Heart right ventricle (tissue), 16 donors: ENCODE measurements at regions of chr12 and their contacts with region 1.

Region 1: DNA sequence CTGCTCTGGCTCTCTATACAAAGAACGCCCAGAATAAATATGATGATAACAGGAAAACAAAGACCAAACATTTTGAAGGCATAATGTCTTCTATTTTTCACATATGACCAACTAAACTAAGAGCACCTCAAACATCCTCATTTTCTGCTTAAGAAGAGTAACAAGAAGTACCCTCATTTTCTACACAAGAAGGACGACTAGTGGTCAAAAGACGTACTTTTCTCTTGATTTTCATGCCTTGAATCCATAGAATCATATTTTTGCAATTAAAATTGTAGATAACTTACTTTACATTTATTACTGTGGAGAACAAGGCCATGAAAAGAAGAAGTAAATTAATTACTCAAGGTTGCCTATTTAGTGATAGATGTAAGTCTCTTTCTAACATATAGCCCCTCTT is 358.6 kb downstream of the DUSP6 start:
- DNase-seq: no peak
- ATAC-seq: peak in 1 of 8 donors; percentile 49
- H3K4me3 ChIP-seq: no peak overlapping the region
- H3K27ac ChIP-seq: no peak overlapping the region
- H3K4me1 ChIP-seq: peaks cover 0 to 4% (median 0%) of the 10 kb centered on the region in 9 donors
- H3K27me3 ChIP-seq: no peaks in the 10 kb centered on the region
- CTCF ChIP-seq: peak; percentile 32 to 76 (median 60)

Region 2: DNA sequence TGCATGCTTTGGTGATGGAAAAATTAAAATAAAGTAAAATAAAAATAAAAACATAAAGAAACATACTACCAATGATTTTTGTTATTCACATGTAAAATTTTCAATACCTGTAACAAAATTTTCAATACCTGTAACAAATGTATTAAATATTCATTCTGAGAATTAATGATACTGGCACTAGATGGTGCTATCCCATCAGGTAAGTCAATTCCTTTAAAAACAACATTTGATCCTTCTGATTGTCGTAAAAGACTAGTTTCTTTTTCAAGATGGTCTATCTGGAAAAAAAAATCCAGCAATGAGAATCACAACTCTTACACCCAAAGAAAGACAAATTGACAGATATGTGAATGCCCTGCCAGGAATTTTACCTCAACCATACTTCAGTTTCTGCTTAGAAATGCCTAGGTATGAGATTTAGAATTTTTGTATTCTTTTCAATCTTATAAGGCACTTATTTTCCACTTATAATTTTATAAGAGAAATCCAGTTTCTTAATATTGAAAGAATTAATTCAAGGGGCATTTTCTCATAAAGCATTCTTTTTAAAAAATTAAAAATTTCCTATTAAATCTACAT is 882.5 kb before region 1 on chr12:
- intact Hi-C with region 1: loop called in 6 of 10 experiments (anchors 2 to 10 kb)
- DNase-seq: no peak
- ATAC-seq: no peak
- H3K4me3 ChIP-seq: peak overlapping the region in 4 of 10 donors; percentile 24 to 41 (median 28)
- H3K27ac ChIP-seq: no peak overlapping the region
- H3K4me1 ChIP-seq: peaks cover 0 to 4% (median 0%) of the 10 kb centered on the region in 9 donors
- H3K27me3 ChIP-seq: no peaks in the 10 kb centered on the region
- CTCF ChIP-seq: peak; percentile 23 to 61 (median 49)

Region 3: GRCh38 chr12:88141770-88142609 is 851.7 kb before region 1 on chr12 and contains the starts of genes CEP290 and TMTC3:
- intact Hi-C with region 1: loop called in 2 of 10 experiments (anchors 10 kb)
- DNase-seq: peak; percentile 88 to 98
- ATAC-seq: peak; percentile 99 to 100 (median 99)
- H3K4me3 ChIP-seq: peak within 1 kb of the TSS; percentile 46 to 91 (median 74)
- H3K27ac ChIP-seq: peak within 1 kb of the TSS in 9 of 10 donors; percentile 48 to 86 (median 78)
- H3K4me1 ChIP-seq: peaks cover 0 to 28% (median 20%) of the 10 kb centered on the region in 9 donors
- H3K27me3 ChIP-seq: no peaks in the 10 kb centered on the region
- CTCF ChIP-seq: no peak
- total RNA-seq, gene CEP290: 6.0 to 10.9 (median 7.9) TPM
- total RNA-seq, gene TMTC3: 6.5 to 11.9 (median 9.0) TPM

Region 4: DNA sequence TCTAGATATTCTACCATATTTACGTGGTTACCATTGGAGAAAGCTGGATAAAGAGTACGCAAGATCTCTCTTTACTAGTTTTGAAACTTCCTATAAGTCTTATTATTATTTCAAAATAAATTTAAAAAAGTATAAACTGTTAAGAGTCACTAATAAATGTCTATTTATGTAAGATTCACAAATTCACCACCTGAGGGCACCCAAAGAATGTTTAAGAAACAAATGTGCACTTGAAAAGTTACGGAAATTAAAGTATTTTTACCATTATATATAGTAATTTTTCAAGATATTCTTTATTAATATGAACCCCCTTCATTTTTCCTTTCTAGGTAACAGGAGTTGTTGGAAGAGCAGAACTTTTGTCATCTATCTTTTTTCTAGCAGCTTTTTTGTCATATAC is 839.7 kb before region 1 on chr12:
- intact Hi-C with region 1: loop called in 7 of 10 experiments (anchors 5 to 10 kb)
- DNase-seq: no peak
- ATAC-seq: no peak
- H3K4me3 ChIP-seq: no peak overlapping the region
- H3K27ac ChIP-seq: no peak overlapping the region
- H3K4me1 ChIP-seq: no peaks in the 10 kb centered on the region
- H3K27me3 ChIP-seq: no peaks in the 10 kb centered on the region
- CTCF ChIP-seq: peak in 7 of 9 donors; percentile 14 to 63 (median 38)

Region 5: DNA sequence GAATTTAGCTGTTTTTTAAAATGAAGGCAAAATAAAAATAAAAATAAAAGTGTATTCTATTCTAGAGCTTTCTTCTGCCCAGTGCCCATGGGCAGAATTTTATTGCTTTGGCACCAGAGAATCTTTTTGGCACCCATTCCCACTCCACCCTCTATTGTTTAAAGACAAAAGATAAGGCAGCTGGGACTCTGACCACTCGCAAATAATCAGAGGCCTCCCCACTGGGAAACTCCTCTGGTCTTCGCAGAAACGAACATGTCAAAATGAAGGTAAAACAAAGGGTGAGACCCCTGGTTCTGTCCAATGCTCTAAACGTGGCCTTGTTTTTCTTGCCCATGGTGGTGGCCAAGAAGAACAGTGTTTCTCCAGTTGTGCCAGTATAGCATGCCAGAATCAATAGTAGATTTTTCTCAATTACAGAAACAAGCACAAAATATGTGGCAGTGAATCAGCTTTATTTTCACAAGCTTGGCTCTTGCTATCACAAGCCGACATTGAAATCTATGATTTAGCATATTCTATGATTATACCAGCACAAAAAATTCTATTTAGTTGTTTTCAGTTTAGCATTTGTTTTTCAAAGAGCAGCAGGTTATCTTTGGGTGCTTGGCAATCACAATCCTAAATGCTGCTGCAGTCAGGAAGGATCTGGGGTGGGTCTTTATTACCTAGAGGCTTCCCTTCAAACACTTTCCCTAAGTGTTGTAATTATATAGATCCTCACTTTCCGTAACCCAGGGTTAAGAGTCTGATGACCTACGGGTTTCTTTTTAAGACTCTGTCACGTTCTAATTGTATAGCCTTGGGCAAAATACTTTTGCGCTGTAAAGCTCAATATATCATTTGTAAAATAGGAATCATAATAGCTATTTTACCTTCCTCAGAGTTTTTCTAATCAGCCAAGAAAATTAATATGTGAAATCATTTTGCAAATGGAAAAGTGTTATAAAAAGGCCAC is 463.8 kb before region 1 on chr12:
- intact Hi-C with region 1: no loop called
- DNase-seq: no peak
- ATAC-seq: peak in 6 of 8 donors; percentile 22 to 52 (median 42)
- H3K4me3 ChIP-seq: no peak overlapping the region
- H3K27ac ChIP-seq: peak overlapping the region in 8 of 10 donors; percentile 2 to 71 (median 44)
- H3K4me1 ChIP-seq: peaks cover 0 to 21% (median 0%) of the 10 kb centered on the region in 9 donors
- H3K27me3 ChIP-seq: no peaks in the 10 kb centered on the region
- CTCF ChIP-seq: no peak